ENCODE measurements at regions of chr21 and their contacts with region 1.

Region 1: GRCh38 chr21:14482165-14482564 is 64.0 kb downstream of the SAMSN1 start:
- DNase-seq: peak; percentile 42
- H3K4me3 Mint-ChIP-seq: peak overlapping the region; percentile 19
- H3K27ac Mint-ChIP-seq: peak overlapping the region; percentile 87
- H3K4me1 Mint-ChIP-seq: peaks cover 48% of the 10 kb centered on the region
- H3K27me3 Mint-ChIP-seq: no peaks in the 10 kb centered on the region

Region 2: GRCh38 chr21:14523234-14523633 is 41.1 kb after region 1 on chr21:
- CTCF ChIA-PET with region 1: no interaction called
- POLR2A ChIA-PET with region 1: interaction called, 22 read pairs
- DNase-seq: peak; percentile 59
- H3K4me3 Mint-ChIP-seq: peak overlapping the region; percentile 60
- H3K27ac Mint-ChIP-seq: peak overlapping the region; percentile 75
- H3K4me1 Mint-ChIP-seq: peaks cover 66% of the 10 kb centered on the region
- H3K27me3 Mint-ChIP-seq: no peaks in the 10 kb centered on the region